CD4-positive, alpha-beta T cell (primary cell): ENCODE measurements at regions of chr17 and their contacts with region 1.

Region 1: GRCh38 chr17:39676198-39676819 is 8.1 kb downstream of the PNMT start:
- DNase-seq: peak in 12 of 14 experiments; percentile 22 to 90 (median 48)
- ATAC-seq: peak; percentile 77
- H3K4me3 ChIP-seq: no peak overlapping the region
- H3K4me3 Mint-ChIP-seq: peak overlapping the region; percentile 49
- H3K27ac ChIP-seq: peak overlapping the region; percentile 44 to 52
- H3K27ac Mint-ChIP-seq: peak overlapping the region; percentile 91
- H3K4me1 ChIP-seq: peaks cover 69% of the 10 kb centered on the region
- H3K4me1 Mint-ChIP-seq: peaks cover 65% of the 10 kb centered on the region
- H3K27me3 ChIP-seq: no peaks in the 10 kb centered on the region
- H3K27me3 Mint-ChIP-seq: peaks cover 5% of the 10 kb centered on the region
- CTCF ChIP-seq: no peak

Region 2: DNA sequence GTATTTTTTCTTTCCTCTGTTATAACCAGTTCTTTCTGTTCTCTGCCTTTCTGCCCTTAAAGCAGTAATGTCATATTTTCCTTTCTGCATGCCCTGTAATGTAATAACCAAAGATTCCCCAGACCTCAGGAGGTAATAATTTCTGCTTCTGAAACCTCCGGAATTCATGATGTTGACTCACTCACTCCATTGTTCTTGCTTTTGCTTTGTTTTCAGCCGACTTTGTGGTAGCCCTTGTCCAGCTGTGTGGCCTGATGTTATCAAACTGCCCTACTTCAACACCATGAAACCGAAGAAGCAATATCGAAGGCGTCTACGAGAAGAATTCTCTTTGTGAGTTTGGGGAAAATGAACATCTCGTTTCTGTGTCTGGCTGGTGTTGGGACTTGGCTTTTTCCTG is 159.1 kb before region 1 on chr17:
- CTCF ChIA-PET with region 1: no interaction called
- POLR2A ChIA-PET with region 1: no interaction called
- intact Hi-C with region 1: no loop called
- DNase-seq: no peak
- ATAC-seq: no peak
- H3K4me3 ChIP-seq: no peak overlapping the region
- H3K4me3 Mint-ChIP-seq: no peak overlapping the region
- H3K27ac ChIP-seq: no peak overlapping the region
- H3K27ac Mint-ChIP-seq: no peak overlapping the region
- H3K4me1 ChIP-seq: no peaks in the 10 kb centered on the region
- H3K4me1 Mint-ChIP-seq: no peaks in the 10 kb centered on the region
- H3K27me3 ChIP-seq: no peaks in the 10 kb centered on the region
- H3K27me3 Mint-ChIP-seq: no peaks in the 10 kb centered on the region
- CTCF ChIP-seq: no peak

Region 3: DNA sequence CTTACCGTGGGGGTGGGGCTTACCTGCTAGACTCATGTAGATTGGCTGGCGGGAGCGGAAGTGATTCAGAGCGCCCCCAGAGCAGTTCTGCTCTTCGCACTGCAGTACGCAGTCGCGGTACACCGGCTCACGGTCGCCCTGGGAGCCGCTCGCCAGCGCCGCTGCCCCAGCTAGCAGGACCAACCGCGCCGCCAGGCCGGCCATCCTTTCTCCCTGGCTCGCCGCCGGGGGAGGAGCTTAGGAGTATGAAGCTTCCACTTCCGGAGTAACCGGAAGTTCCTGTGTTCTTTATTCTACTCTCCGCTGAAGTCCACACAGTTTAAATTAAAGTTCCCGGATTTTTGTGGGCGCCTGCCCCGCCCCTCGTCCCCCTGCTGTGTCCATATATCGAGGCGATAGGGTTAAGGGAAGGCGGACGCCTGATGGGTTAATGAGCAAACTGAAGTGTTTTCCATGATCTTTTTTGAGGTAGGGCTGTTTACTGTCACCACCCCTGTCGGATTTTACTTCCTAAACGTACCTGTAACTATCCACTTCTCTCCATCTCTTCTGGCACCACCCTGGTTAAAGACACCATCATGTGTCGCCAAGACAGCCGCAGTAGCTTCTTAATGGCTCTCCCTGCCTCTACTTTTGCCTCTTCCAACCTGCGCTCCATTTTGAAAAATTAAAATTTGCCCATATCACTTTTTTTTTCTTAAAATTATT is 11.7 kb after region 1 on chr17 and contains the start of gene PGAP3:
- CTCF ChIA-PET with region 1: interaction called, 5 read pairs
- POLR2A ChIA-PET with region 1: interaction called, 23 read pairs
- intact Hi-C with region 1: no loop called
- DNase-seq: peak; percentile 66 to 91 (median 74)
- ATAC-seq: peak; percentile 87
- H3K4me3 ChIP-seq: peak within 1 kb of the TSS; percentile 74
- H3K4me3 Mint-ChIP-seq: peak within 1 kb of the TSS; percentile 100
- H3K27ac ChIP-seq: peak within 1 kb of the TSS; percentile 83
- H3K27ac Mint-ChIP-seq: peak within 1 kb of the TSS; percentile 98
- H3K4me1 ChIP-seq: peaks cover 19% of the 10 kb centered on the region
- H3K4me1 Mint-ChIP-seq: peaks cover 31% of the 10 kb centered on the region
- H3K27me3 ChIP-seq: no peaks in the 10 kb centered on the region
- H3K27me3 Mint-ChIP-seq: no peaks in the 10 kb centered on the region
- CTCF ChIP-seq: no peak
- total RNA-seq, gene PGAP3: 26.1 to 30.7 TPM

Region 4: GRCh38 chr17:39704821-39705551 is 28.7 kb after region 1 on chr17:
- CTCF ChIA-PET with region 1: no interaction called
- POLR2A ChIA-PET with region 1: no interaction called
- intact Hi-C with region 1: no loop called
- DNase-seq: peak in 1 of 14 experiments; percentile 6
- ATAC-seq: no peak
- H3K4me3 ChIP-seq: no peak overlapping the region
- H3K4me3 Mint-ChIP-seq: no peak overlapping the region
- H3K27ac ChIP-seq: no peak overlapping the region
- H3K27ac Mint-ChIP-seq: no peak overlapping the region
- H3K4me1 ChIP-seq: peaks cover 33% of the 10 kb centered on the region
- H3K4me1 Mint-ChIP-seq: peaks cover 9% of the 10 kb centered on the region
- H3K27me3 ChIP-seq: peaks cover 13 to 20% of the 10 kb centered on the region in 2 experiments
- H3K27me3 Mint-ChIP-seq: peaks cover 15% of the 10 kb centered on the region
- CTCF ChIP-seq: no peak

Region 5: GRCh38 chr17:39730095-39730921 is 54.0 kb after region 1 on chr17 and contains the start of gene MIEN1:
- CTCF ChIA-PET with region 1: interaction called, 3 read pairs
- POLR2A ChIA-PET with region 1: interaction called, 10 read pairs
- intact Hi-C with region 1: loop called in 1 of 2 experiments (anchors 5 kb)
- DNase-seq: peak; percentile 86 to 98 (median 94)
- ATAC-seq: peak; percentile 91
- H3K4me3 ChIP-seq: peak within 1 kb of the TSS; percentile 79
- H3K4me3 Mint-ChIP-seq: peak within 1 kb of the TSS; percentile 91
- H3K27ac ChIP-seq: peak within 1 kb of the TSS; percentile 90 to 91
- H3K27ac Mint-ChIP-seq: peak within 1 kb of the TSS; percentile 88
- H3K4me1 ChIP-seq: peaks cover 23% of the 10 kb centered on the region
- H3K4me1 Mint-ChIP-seq: peaks cover 17% of the 10 kb centered on the region
- H3K27me3 ChIP-seq: no peaks in the 10 kb centered on the region
- H3K27me3 Mint-ChIP-seq: no peaks in the 10 kb centered on the region
- CTCF ChIP-seq: peak; percentile 91
- total RNA-seq, gene MIEN1: 31.5 to 32.3 TPM